HepG2 (cell line): ENCODE measurements at regions of chr18 and their contacts with region 1.

Region 1: GRCh38 chr18:9575558-9575957 is 38.8 kb downstream of the PPP4R1 start:
- DNase-seq: peak; percentile 95
- ATAC-seq: peak; percentile 98
- H3K4me3 ChIP-seq: no peak overlapping the region
- H3K27ac ChIP-seq: peak overlapping the region; percentile 48
- H3K4me1 ChIP-seq: peaks cover 9% of the 10 kb centered on the region
- H3K27me3 ChIP-seq: no peaks in the 10 kb centered on the region
- CTCF ChIP-seq: peak; percentile 93
- EP300 ChIP-seq: no peak
- POLR2A ChIP-seq: no peak
- RAD21 ChIP-seq: peak; percentile 80; the same call in 1 of the 2 replicates

Region 2: GRCh38 chr18:9614401-9615279 is 39.1 kb after region 1 on chr18 and contains the start of gene PPP4R1:
- CTCF ChIA-PET with region 1: interaction called, 3 read pairs
- POLR2A ChIA-PET with region 1: no interaction called
- in situ Hi-C with region 1: no loop called
- intact Hi-C with region 1: loop called (anchors 5 kb)
- DNase-seq: peak; percentile 33
- ATAC-seq: peak; percentile 73
- H3K4me3 ChIP-seq: peak within 1 kb of the TSS; percentile 93 to 99 (median 94)
- H3K27ac ChIP-seq: peak within 1 kb of the TSS; percentile 81
- H3K4me1 ChIP-seq: peaks cover 59% of the 10 kb centered on the region
- H3K27me3 ChIP-seq: no peaks in the 10 kb centered on the region
- CTCF ChIP-seq: no peak
- EP300 ChIP-seq: no peak
- POLR2A ChIP-seq: peak; percentile 42 to 61
- RAD21 ChIP-seq: peak; percentile 49; the same call in 1 of the 2 replicates
- total RNA-seq, gene PPP4R1: 66.5 and 84.6 TPM in 2 replicates

Region 3: DNA sequence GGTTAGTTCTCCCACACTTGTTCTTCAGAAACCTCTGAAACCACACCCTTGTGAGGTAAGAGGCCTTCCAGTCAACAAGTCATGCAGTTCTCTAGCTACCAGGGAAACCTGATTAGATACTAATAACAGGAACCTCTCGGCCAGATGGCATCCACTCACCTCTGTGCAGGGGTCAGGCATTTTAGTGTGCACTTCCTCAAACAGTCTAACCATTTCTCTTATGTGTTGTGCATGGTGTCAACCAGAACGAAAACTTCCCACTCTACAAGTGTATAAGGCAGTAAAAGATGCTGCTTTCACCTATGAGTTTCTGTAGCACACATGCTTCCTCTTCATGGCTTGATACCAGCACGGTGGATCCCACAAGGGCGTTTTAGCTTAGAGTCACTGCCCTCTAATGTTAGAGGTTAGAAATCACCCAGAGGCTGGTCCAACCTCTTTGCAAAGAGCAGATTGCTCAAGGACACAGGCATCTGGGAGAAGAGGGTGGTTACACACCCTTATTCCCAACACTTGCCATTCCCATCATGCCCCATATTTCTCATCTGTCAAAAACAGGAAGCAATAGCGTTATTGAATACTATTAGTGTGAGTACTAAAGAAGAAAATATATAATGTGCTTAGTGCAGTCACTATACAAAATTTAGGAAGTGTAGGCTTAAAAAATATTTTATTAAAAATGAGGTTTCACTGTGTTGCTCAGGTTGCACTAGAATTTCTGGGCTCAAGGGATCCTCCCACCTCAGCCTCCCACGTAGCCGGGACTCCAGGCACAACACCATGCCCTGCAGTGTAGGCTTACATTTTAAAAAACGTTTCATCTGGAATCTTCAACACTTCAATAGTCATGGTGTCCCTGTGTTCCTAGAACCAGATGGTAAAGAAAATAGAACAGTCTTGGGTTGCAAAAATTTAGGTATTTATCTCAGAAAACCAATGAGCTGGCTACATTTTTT is 98.0 kb after region 1 on chr18:
- CTCF ChIA-PET with region 1: no interaction called
- POLR2A ChIA-PET with region 1: interaction called, 4 read pairs
- in situ Hi-C with region 1: no loop called
- intact Hi-C with region 1: loop called (anchors 2 kb)
- DNase-seq: peak; percentile 86
- ATAC-seq: peak; percentile 89
- H3K4me3 ChIP-seq: peak overlapping the region; percentile 31 to 60 (median 34); a peak in 3 of 6 replicates
- H3K27ac ChIP-seq: peak overlapping the region; percentile 88
- H3K4me1 ChIP-seq: peaks cover 28% of the 10 kb centered on the region
- H3K27me3 ChIP-seq: 0 out of 5 replicates have a peak, but pooled peaks cover 0 to 6% of the 10 kb centered on the region in 2 experiments
- CTCF ChIP-seq: peak; percentile 72
- EP300 ChIP-seq: no peak
- POLR2A ChIP-seq: 0 out of 4 replicates have a peak, but pooled peaks of 1 of the 2 experiments have one; percentile 25
- RAD21 ChIP-seq: peak; percentile 52; the same call in 1 of the 2 replicates

Region 4: DNA sequence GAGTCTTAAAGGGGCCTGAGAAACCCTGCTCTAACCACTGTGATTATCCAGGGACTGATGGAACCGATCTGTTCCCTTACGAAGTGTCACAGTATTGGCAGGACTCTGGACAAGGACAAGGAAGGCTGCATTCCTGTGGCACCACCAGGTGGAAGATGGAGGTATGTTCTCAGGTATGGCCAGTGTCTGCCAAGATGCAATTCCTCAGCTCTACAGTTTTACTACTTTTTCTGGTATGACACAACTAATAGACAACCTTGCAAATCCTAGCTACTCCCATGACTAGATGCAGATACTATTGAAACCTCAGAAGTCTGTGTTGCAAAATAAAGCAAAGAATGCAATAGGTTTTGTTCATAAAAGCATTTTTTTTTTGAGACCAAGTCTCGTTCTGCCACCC is 147.1 kb after region 1 on chr18:
- CTCF ChIA-PET with region 1: no interaction called
- POLR2A ChIA-PET with region 1: no interaction called
- in situ Hi-C with region 1: no loop called
- intact Hi-C with region 1: loop called (anchors 5 kb)
- DNase-seq: peak; percentile 37
- ATAC-seq: peak; percentile 73
- H3K4me3 ChIP-seq: no peak overlapping the region
- H3K27ac ChIP-seq: no peak overlapping the region
- H3K4me1 ChIP-seq: no peaks in the 10 kb centered on the region
- H3K27me3 ChIP-seq: no peaks in the 10 kb centered on the region
- CTCF ChIP-seq: peak; percentile 63
- EP300 ChIP-seq: no peak
- POLR2A ChIP-seq: no peak
- RAD21 ChIP-seq: 0 out of 2 replicates have a peak, but pooled peaks have one; percentile 18

Region 5: DNA sequence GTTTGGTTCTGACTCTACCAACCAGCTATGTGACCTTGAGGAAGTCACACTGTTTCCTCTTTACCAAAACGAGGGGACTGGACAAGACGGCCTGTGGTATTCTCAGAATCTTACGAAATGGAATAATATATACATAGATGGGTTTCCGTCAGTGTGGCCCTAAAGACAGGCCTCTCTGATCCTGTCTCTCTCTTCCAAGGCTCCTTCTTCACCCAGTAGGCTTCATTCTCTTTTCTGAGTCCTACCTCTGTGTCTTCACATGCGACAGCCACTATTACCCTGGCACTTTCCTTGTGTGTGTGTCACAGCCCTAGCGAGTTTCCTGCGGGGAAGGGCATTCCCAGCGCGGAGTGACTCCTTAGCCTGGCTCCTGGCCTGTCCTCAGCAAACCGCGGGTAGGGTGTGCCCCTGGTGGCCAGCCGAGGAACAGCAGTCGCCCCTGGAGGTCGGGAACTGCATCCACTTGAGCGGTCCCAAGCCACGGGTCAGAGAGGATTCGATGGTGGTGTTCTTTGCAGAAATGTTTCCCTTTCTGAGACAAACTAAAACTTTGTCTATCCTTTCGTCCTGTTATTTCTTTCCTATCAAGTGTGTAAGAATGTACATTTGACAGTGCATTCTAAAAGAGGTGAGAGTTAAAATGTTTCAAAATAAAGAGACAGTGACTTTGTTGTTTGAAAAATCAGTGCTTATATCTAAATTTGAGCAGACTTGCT is 195.9 kb after region 1 on chr18:
- CTCF ChIA-PET with region 1: interaction called, 27 read pairs
- POLR2A ChIA-PET with region 1: no interaction called
- in situ Hi-C with region 1: no loop called
- intact Hi-C with region 1: loop called (anchors 10 kb)
- DNase-seq: peak; percentile 53
- ATAC-seq: peak; percentile 99
- H3K4me3 ChIP-seq: peak overlapping the region in 1 of 3 experiments; percentile 51; a peak in 2 of 6 replicates
- H3K27ac ChIP-seq: no peak overlapping the region
- H3K4me1 ChIP-seq: peaks cover 17% of the 10 kb centered on the region
- H3K27me3 ChIP-seq: peaks cover 0 to 5% of the 10 kb centered on the region in 2 experiments; a peak in 1 of 5 replicates
- CTCF ChIP-seq: peak; percentile 96
- EP300 ChIP-seq: no peak
- POLR2A ChIP-seq: no peak
- RAD21 ChIP-seq: peak; percentile 90

Region 6: GRCh38 chr18:9792565-9793245 is 217.1 kb after region 1 on chr18:
- CTCF ChIA-PET with region 1: no interaction called
- POLR2A ChIA-PET with region 1: no interaction called
- in situ Hi-C with region 1: no loop called
- intact Hi-C with region 1: loop called (anchors 5 kb)
- DNase-seq: peak; percentile 38
- ATAC-seq: peak; percentile 90
- H3K4me3 ChIP-seq: no peak overlapping the region
- H3K27ac ChIP-seq: no peak overlapping the region
- H3K4me1 ChIP-seq: no peaks in the 10 kb centered on the region
- H3K27me3 ChIP-seq: no peaks in the 10 kb centered on the region; a peak in 1 of 5 replicates
- CTCF ChIP-seq: peak; percentile 76
- EP300 ChIP-seq: no peak
- POLR2A ChIP-seq: no peak
- RAD21 ChIP-seq: peak; percentile 71